ENCODE measurements at regions of chr13 and their contacts with region 1.

Region 1: DNA sequence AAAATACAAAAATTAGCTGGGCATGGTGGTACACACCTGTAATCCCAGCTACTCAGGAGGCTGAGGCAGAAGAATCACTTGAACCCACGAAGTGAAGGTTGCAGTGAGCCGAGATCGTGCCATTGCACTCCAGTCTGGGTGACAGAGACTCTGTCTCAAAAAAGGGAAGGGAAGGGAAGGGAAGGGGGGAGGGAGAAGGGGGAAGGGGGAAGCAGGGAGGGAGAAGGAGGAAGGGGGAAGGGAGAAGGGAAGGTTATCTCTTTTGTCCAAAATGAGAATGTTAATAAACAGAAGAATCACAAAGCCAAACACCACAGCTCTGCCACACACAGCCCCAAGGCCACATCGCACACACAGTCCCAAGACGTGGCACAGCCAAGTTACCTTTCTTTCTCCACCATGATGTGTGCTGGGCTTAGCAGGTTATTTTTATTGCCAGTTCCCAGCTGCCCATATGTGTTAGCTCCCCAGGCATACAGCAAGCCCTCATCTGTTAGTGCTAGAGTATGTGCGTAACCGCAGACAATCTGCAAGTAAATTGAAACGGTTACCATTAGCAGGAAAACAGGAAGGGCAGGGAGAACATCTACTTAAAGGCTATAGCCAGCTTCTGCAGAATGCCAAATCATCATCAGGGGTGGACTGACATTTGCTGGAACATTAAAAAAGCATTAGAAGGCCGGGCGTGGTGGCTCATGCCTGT is 34.3 kb downstream of the RCBTB1 start:
- DNase-seq: no peak
- H3K4me3 ChIP-seq: no peak overlapping the region
- H3K27ac ChIP-seq: no peak overlapping the region
- H3K4me1 ChIP-seq: no peaks in the 10 kb centered on the region
- H3K27me3 ChIP-seq: no peaks in the 10 kb centered on the region
- CTCF ChIP-seq: no peak
- EP300 ChIP-seq: no peak
- POLR2A ChIP-seq: no peak

Region 2: GRCh38 chr13:49033101-49033500 is 518.0 kb before region 1 on chr13:
- intact Hi-C with region 1: no loop called
- DNase-seq: no peak
- H3K4me3 ChIP-seq: no peak overlapping the region
- H3K27ac ChIP-seq: no peak overlapping the region
- H3K4me1 ChIP-seq: peaks cover 0 to 3% (median 0%) of the 10 kb centered on the region in 4 donors
- H3K27me3 ChIP-seq: no peaks in the 10 kb centered on the region
- CTCF ChIP-seq: no peak
- EP300 ChIP-seq: no peak
- POLR2A ChIP-seq: no peak

Region 3: GRCh38 chr13:49502954-49503353 is 48.1 kb before region 1 on chr13:
- intact Hi-C with region 1: no loop called
- DNase-seq: peak in 1 of 2 donors; percentile 32
- H3K4me3 ChIP-seq: no peak overlapping the region
- H3K27ac ChIP-seq: peak overlapping the region in 3 of 5 donors; percentile 10 to 52 (median 38)
- H3K4me1 ChIP-seq: peaks cover 0 to 36% (median 18%) of the 10 kb centered on the region in 4 donors
- H3K27me3 ChIP-seq: no peaks in the 10 kb centered on the region
- CTCF ChIP-seq: no peak
- EP300 ChIP-seq: no peak
- POLR2A ChIP-seq: no peak

Region 4: GRCh38 chr13:49606747-49607648 is 55.9 kb after region 1 on chr13:
- intact Hi-C with region 1: loop called (anchors 10 kb)
- DNase-seq: peak; percentile 92 to 94
- H3K4me3 ChIP-seq: peak overlapping the region; percentile 26 to 44 (median 34)
- H3K27ac ChIP-seq: no peak overlapping the region
- H3K4me1 ChIP-seq: peaks cover 0 to 10% (median 7%) of the 10 kb centered on the region in 4 donors
- H3K27me3 ChIP-seq: no peaks in the 10 kb centered on the region
- CTCF ChIP-seq: peak in 5 of 7 experiments; percentile 53 to 78 (median 68)
- EP300 ChIP-seq: no peak
- POLR2A ChIP-seq: no peak